Activated CD8-positive, alpha-beta T cell treated with anti-CD3 and anti-CD28 coated beads for 36 hours (primary cell): ENCODE measurements at regions of chr9 and their contacts with region 1.

Region 1: GRCh38 chr9:36407122-36407723 is 7.2 kb upstream of the RNF38 start:
- DNase-seq: peak; percentile 70
- ATAC-seq: peak; percentile 93
- H3K4me3 Mint-ChIP-seq: no peak overlapping the region
- H3K27ac Mint-ChIP-seq: peak overlapping the region; percentile 69
- H3K4me1 Mint-ChIP-seq: peaks cover 19% of the 10 kb centered on the region
- H3K27me3 Mint-ChIP-seq: no peaks in the 10 kb centered on the region
- CTCF ChIP-seq: peak; percentile 93

Region 2: DNA sequence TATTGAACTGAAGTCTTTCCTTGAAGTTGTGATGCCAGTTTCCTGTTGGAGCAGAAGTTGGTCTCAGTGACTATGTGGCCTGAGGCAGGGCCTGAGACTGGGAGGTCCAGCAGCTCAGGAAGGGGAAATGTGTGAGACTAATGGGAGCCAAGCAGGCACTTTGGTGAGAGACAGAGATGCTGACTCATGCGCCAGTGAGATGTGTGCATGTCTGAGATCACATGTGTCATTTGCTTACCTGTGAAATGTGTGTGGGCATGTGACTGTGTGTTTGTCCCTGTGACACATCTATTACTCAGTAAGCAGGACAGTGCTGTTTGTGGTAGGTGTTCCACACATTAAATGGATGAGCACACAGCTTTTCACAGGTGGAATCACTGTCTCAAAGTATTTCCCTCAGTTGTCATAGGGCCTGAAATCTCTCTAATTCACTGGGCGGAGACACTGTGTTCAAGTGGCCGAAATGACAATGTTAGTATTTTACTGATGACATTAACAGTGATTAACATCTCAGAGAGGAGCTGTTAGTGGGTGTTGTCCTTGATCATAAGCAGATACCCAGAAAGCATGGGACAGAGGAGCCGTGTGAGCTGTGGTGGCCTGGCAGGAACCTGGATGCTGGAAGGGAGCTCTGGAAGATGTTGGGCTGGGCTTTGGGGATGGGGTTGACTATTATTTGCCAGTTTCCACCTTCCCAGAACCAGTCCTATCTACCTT is 608.4 kb before region 1 on chr9:
- CTCF ChIA-PET with region 1: no interaction called
- POLR2A ChIA-PET with region 1: no interaction called
- intact Hi-C with region 1: no loop called
- DNase-seq: peak; percentile 59
- ATAC-seq: peak; percentile 92
- H3K4me3 Mint-ChIP-seq: no peak overlapping the region
- H3K27ac Mint-ChIP-seq: no peak overlapping the region
- H3K4me1 Mint-ChIP-seq: peaks cover 20% of the 10 kb centered on the region
- H3K27me3 Mint-ChIP-seq: no peaks in the 10 kb centered on the region
- CTCF ChIP-seq: no peak

Region 3: GRCh38 chr9:36396985-36397384 is 10.2 kb before region 1 on chr9:
- CTCF ChIA-PET with region 1: interaction called, 15 read pairs
- POLR2A ChIA-PET with region 1: no interaction called
- intact Hi-C with region 1: no loop called
- DNase-seq: peak; percentile 17
- ATAC-seq: no peak
- H3K4me3 Mint-ChIP-seq: no peak overlapping the region
- H3K27ac Mint-ChIP-seq: no peak overlapping the region
- H3K4me1 Mint-ChIP-seq: peaks cover 66% of the 10 kb centered on the region
- H3K27me3 Mint-ChIP-seq: no peaks in the 10 kb centered on the region
- CTCF ChIP-seq: no peak

Region 4: GRCh38 chr9:36441966-36442365 is 34.7 kb after region 1 on chr9:
- CTCF ChIA-PET with region 1: interaction called, 84 read pairs
- POLR2A ChIA-PET with region 1: no interaction called
- intact Hi-C with region 1: loop called (anchors 5 kb)
- DNase-seq: no peak
- ATAC-seq: no peak
- H3K4me3 Mint-ChIP-seq: no peak overlapping the region
- H3K27ac Mint-ChIP-seq: no peak overlapping the region
- H3K4me1 Mint-ChIP-seq: peaks cover 55% of the 10 kb centered on the region
- H3K27me3 Mint-ChIP-seq: no peaks in the 10 kb centered on the region
- CTCF ChIP-seq: no peak

Region 5: DNA sequence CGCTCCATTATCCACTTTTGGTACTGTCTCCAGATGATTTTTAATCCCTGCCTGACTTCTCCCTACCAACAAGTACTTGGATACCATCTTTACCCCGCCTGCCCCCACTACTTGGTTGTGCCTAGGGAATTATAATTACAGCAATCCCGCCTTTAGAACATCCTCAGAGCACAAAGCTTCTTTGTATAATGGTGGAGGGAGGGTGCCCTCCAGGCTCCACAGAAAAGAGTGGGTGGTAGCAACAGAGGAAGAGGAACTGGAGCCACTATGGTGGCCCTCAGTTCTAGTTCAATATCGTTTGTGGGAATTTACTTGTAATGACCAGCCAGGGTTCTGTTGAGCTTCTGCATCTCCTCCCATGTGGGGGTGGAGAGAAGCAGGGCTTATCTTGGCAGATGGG is 71.9 kb after region 1 on chr9:
- CTCF ChIA-PET with region 1: interaction called, 10 read pairs
- POLR2A ChIA-PET with region 1: no interaction called
- intact Hi-C with region 1: no loop called
- DNase-seq: no peak
- ATAC-seq: no peak
- H3K4me3 Mint-ChIP-seq: no peak overlapping the region
- H3K27ac Mint-ChIP-seq: peak overlapping the region; percentile 68
- H3K4me1 Mint-ChIP-seq: peaks cover 28% of the 10 kb centered on the region
- H3K27me3 Mint-ChIP-seq: no peaks in the 10 kb centered on the region
- CTCF ChIP-seq: no peak

Region 6: GRCh38 chr9:36517131-36517530 is 109.9 kb after region 1 on chr9:
- CTCF ChIA-PET with region 1: interaction called, 10 read pairs
- POLR2A ChIA-PET with region 1: no interaction called
- intact Hi-C with region 1: no loop called
- DNase-seq: no peak
- ATAC-seq: no peak
- H3K4me3 Mint-ChIP-seq: no peak overlapping the region
- H3K27ac Mint-ChIP-seq: no peak overlapping the region
- H3K4me1 Mint-ChIP-seq: no peaks in the 10 kb centered on the region
- H3K27me3 Mint-ChIP-seq: no peaks in the 10 kb centered on the region
- CTCF ChIP-seq: no peak

Region 7: GRCh38 chr9:36560857-36561221 is 153.6 kb after region 1 on chr9:
- CTCF ChIA-PET with region 1: interaction called, 296 read pairs
- POLR2A ChIA-PET with region 1: no interaction called
- intact Hi-C with region 1: no loop called
- DNase-seq: no peak
- ATAC-seq: no peak
- H3K4me3 Mint-ChIP-seq: no peak overlapping the region
- H3K27ac Mint-ChIP-seq: no peak overlapping the region
- H3K4me1 Mint-ChIP-seq: no peaks in the 10 kb centered on the region
- H3K27me3 Mint-ChIP-seq: no peaks in the 10 kb centered on the region
- CTCF ChIP-seq: no peak